ENCODE measurements at regions of chr6 and their contacts with region 1.

Region 1: DNA sequence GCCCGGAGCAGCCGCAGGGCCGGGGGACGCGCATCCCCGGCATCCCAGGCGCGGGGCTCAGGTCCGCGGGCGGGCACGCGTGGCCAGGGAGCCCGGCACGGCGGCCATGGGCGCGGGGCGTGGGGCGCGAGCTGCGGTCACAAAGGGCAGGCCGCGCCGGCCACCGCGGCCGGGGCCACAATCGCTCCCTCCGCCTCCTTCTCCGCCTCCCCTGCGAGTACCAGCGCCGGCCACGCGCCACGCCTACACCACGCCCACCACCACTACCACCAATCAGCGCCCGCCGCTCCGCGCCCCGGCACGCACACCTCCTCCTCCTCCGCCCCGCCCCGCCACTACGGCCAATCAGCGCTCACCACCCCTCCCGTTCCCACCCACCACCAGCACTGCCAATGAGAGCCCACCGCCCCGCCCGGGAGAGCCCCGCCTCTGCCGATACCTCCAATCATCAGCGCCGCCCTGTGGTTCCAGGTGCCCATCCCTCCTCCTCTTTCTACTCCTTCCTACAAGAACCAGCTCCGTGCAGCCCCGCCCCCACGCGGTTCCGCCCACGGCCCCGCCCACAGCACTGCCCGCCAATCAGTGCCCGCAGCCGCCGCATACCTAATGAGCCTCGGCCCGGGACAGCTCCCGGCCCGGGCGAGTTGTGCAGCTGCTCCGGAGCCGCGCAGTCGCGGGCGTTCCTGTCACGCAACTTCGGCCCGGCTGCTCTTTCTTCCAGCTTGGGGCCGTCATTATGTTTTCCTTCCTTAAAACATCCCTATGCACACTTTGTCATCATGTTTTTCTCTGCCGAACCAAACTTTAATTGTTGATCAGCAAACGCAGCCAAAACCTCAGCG is at the start of gene RPS6KA2:
- DNase-seq: peak; percentile 95 to 98
- H3K4me3 ChIP-seq: peak within 1 kb of the TSS; percentile 91
- H3K27ac ChIP-seq: peak within 1 kb of the TSS; percentile 30
- H3K4me1 ChIP-seq: peaks cover 29% of the 10 kb centered on the region
- H3K27me3 ChIP-seq: no peaks in the 10 kb centered on the region
- CTCF ChIP-seq: 0 out of 2 replicates have a peak, but pooled peaks have one; percentile 28
- total RNA-seq, gene RPS6KA2: 18.5 and 20.6 TPM in 2 replicates

Region 2: GRCh38 chr6:166382933-166383801 is 244.1 kb before region 1 on chr6 and contains the start of gene MPC1:
- CTCF ChIA-PET with region 1: interaction called, 4 read pairs
- POLR2A ChIA-PET with region 1: no interaction called
- intact Hi-C with region 1: loop called (anchors 2 kb)
- DNase-seq: peak; percentile 80 to 93
- H3K4me3 ChIP-seq: peak within 1 kb of the TSS; percentile 97
- H3K27ac ChIP-seq: peak within 1 kb of the TSS; percentile 80
- H3K4me1 ChIP-seq: 0 out of 2 replicates have a peak, but pooled peaks cover 5% of the 10 kb centered on the region
- H3K27me3 ChIP-seq: no peaks in the 10 kb centered on the region
- CTCF ChIP-seq: no peak
- total RNA-seq, gene MPC1: 7.4 and 13.3 TPM in 2 replicates

Region 3: GRCh38 chr6:166515072-166515810 is 112.0 kb before region 1 on chr6:
- CTCF ChIA-PET with region 1: no interaction called
- POLR2A ChIA-PET with region 1: interaction called, 4 read pairs
- intact Hi-C with region 1: loop called (anchors 2 kb)
- DNase-seq: peak; percentile 45 to 67
- H3K4me3 ChIP-seq: no peak overlapping the region
- H3K27ac ChIP-seq: no peak overlapping the region
- H3K4me1 ChIP-seq: no peaks in the 10 kb centered on the region
- H3K27me3 ChIP-seq: no peaks in the 10 kb centered on the region
- CTCF ChIP-seq: peak; percentile 55

Region 4: GRCh38 chr6:166556871-166557322 is 70.4 kb before region 1 on chr6:
- CTCF ChIA-PET with region 1: no interaction called
- POLR2A ChIA-PET with region 1: interaction called, 5 read pairs
- intact Hi-C with region 1: loop called (anchors 2 kb)
- DNase-seq: peak; percentile 94 to 98
- H3K4me3 ChIP-seq: peak overlapping the region; percentile 43; the same call in 1 of the 2 replicates
- H3K27ac ChIP-seq: peak overlapping the region; percentile 88
- H3K4me1 ChIP-seq: peaks cover 34% of the 10 kb centered on the region
- H3K27me3 ChIP-seq: no peaks in the 10 kb centered on the region
- CTCF ChIP-seq: no peak

Region 5: GRCh38 chr6:166671434-166672081 is 44.3 kb after region 1 on chr6:
- CTCF ChIA-PET with region 1: no interaction called
- POLR2A ChIA-PET with region 1: interaction called, 28 read pairs
- intact Hi-C with region 1: no loop called
- DNase-seq: no peak
- H3K4me3 ChIP-seq: no peak overlapping the region
- H3K27ac ChIP-seq: no peak overlapping the region
- H3K4me1 ChIP-seq: peaks cover 15% of the 10 kb centered on the region
- H3K27me3 ChIP-seq: peaks cover 3% of the 10 kb centered on the region; the same call in 1 of the 2 replicates
- CTCF ChIP-seq: no peak

Region 6: DNA sequence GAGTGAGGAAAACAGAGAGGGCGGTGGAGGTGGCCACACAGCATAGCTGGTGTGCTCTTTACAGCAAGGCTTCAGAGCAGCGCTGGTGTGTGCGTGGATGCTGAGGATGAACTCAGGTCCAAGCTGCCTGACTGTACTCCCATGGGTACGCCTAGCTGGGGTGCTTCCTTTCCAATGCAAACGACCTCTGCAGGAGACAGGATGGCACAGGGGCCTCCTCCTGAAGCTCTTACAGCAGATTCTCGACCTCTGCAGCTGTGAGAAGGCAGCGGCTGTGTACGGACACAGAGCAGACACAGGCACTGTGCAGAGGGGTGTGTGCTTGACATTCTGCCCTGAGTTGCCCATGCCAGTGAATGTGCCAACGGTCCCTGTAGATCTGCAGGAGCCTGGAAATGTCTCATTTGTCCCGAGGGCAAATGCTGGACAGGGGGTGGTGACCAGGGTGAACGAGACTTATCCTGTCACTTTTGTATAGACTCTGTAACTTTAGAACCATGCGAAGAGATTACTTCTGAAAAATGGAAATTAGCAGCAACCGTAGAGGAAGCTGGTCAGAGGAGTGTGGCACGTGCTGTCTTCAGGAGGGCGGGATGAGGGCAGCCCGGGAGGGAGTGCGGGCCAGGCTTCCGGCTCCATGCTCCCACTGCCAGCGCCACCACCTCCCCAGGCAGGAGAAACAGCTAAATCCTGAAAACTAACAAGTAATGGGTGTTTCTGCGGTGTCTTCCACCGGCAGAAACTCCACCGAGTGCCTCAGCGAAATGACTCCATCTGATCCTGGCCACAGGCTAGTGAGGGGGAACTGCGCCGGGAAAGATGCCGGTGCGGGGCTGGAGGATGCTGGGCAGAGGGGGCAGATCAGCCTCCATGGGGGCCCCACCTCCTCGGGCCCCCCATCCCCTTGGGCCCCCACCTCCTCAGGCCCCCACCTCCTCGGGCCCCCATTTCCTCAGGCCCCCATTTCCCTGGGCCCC is 120.7 kb after region 1 on chr6:
- CTCF ChIA-PET with region 1: no interaction called
- POLR2A ChIA-PET with region 1: no interaction called
- intact Hi-C with region 1: loop called (anchors 5 kb)
- DNase-seq: peak; percentile 25 to 44
- H3K4me3 ChIP-seq: no peak overlapping the region
- H3K27ac ChIP-seq: no peak overlapping the region
- H3K4me1 ChIP-seq: no peaks in the 10 kb centered on the region
- H3K27me3 ChIP-seq: no peaks in the 10 kb centered on the region
- CTCF ChIP-seq: no peak